ENCODE measurements at regions of chr3 and their contacts with region 1.

Region 1: DNA sequence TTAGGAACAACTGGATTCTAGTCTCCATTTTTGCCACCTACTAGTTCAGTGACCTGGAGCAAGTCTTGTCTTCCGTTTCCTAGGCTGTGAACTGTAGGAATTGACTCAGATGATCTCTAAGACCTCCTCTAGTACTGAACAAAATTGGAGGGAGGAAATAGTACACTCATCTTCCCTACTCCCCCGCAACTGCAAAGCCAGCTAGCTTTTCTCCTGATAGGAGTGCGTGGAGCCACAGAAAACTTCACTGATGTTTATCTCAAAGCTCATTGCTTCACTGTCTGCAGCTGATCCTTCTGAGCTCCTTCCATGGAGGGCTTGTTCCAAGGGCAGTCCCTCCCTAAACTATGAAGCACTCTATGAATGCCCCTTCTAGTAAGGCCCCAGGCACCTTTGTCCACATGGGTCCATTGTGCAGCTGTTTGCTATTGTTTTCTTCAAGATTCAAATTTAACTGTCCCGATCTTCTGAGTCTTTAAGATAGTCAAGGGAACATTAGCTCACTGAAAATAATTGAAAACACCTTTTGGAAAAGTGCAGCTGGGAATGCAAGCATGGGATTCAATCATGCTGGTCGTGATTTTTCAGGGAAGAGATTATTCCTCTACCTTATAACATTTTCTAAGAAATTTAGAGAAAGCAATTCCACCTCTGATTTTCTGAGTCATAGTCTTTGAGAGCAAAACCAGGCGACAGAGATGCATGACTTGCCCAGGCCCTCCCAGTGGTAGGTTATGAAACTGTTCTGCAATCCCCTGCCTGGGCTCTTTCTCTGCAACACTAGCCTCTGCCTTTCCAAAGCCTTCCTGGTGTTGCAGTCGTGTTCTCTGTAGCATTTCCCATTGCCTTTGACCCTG is 24.3 kb downstream of the FILIP1L start:
- DNase-seq: no peak
- ATAC-seq: peak; percentile 90
- H3K4me3 Mint-ChIP-seq: peak overlapping the region; percentile 2
- H3K27ac Mint-ChIP-seq: peak overlapping the region; percentile 37
- H3K4me1 Mint-ChIP-seq: peaks cover 44% of the 10 kb centered on the region
- H3K27me3 Mint-ChIP-seq: no peaks in the 10 kb centered on the region

Region 2: DNA sequence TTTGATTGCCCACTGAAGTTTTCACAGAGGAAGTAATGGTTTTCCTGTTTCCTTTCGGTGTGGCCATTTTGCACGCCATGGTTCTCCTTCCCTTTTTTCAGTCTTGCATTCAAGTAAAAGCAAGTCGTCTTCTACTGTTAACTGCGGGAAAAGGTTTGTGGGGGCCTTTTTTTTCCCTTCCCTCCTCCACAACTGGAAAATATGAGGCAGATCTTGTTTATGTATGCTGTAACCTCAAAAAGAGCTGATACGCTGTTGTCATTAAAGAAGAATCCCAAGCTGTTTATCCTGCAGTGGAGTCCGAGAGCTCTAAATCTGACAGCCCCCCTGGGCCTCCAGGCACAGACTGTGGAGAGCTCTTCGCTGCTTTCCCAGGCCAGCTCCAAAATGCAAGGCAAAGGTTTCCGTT is 16.1 kb before region 1 on chr3:
- POLR2A ChIA-PET with region 1: interaction called, 42 read pairs
- DNase-seq: peak; percentile 43
- ATAC-seq: peak; percentile 18
- H3K4me3 Mint-ChIP-seq: peak overlapping the region; percentile 75
- H3K27ac Mint-ChIP-seq: peak overlapping the region; percentile 90
- H3K4me1 Mint-ChIP-seq: peaks cover 68% of the 10 kb centered on the region
- H3K27me3 Mint-ChIP-seq: no peaks in the 10 kb centered on the region

Region 3: GRCh38 chr3:100440895-100441294 is 350.9 kb after region 1 on chr3:
- POLR2A ChIA-PET with region 1: no interaction called
- DNase-seq: no peak
- ATAC-seq: peak; percentile 90
- H3K4me3 Mint-ChIP-seq: peak overlapping the region; percentile 62
- H3K27ac Mint-ChIP-seq: peak overlapping the region; percentile 17
- H3K4me1 Mint-ChIP-seq: peaks cover 9% of the 10 kb centered on the region
- H3K27me3 Mint-ChIP-seq: peaks cover 4% of the 10 kb centered on the region